ENCODE measurements at regions of chr1 and their contacts with region 1.

Region 1: GRCh38 chr1:94522304-94522703 is 19.3 kb downstream of the F3 start:
- ATAC-seq: peak in 7 of 8 experiments; percentile 10 to 52 (median 38)
- H3K4me3 ChIP-seq: no peak overlapping the region
- H3K27ac ChIP-seq: no peak overlapping the region
- H3K4me1 ChIP-seq: no peaks in the 10 kb centered on the region

Region 2: GRCh38 chr1:94792473-94793295 is 270.4 kb after region 1 on chr1:
- in situ Hi-C with region 1: loop called in 1 of 9 experiments (anchors 10 kb)
- ATAC-seq: peak in 3 of 8 experiments; percentile 59 to 86 (median 81)
- H3K4me3 ChIP-seq: no peak overlapping the region
- H3K27ac ChIP-seq: no peak overlapping the region
- H3K4me1 ChIP-seq: no peaks in the 10 kb centered on the region

Region 3: GRCh38 chr1:95154096-95154495 is 631.8 kb after region 1 on chr1:
- in situ Hi-C with region 1: no loop called
- ATAC-seq: no peak
- H3K4me3 ChIP-seq: no peak overlapping the region
- H3K27ac ChIP-seq: no peak overlapping the region
- H3K4me1 ChIP-seq: no peaks in the 10 kb centered on the region